ENCODE measurements at regions of chr22 and their contacts with region 1.

Region 1: DNA sequence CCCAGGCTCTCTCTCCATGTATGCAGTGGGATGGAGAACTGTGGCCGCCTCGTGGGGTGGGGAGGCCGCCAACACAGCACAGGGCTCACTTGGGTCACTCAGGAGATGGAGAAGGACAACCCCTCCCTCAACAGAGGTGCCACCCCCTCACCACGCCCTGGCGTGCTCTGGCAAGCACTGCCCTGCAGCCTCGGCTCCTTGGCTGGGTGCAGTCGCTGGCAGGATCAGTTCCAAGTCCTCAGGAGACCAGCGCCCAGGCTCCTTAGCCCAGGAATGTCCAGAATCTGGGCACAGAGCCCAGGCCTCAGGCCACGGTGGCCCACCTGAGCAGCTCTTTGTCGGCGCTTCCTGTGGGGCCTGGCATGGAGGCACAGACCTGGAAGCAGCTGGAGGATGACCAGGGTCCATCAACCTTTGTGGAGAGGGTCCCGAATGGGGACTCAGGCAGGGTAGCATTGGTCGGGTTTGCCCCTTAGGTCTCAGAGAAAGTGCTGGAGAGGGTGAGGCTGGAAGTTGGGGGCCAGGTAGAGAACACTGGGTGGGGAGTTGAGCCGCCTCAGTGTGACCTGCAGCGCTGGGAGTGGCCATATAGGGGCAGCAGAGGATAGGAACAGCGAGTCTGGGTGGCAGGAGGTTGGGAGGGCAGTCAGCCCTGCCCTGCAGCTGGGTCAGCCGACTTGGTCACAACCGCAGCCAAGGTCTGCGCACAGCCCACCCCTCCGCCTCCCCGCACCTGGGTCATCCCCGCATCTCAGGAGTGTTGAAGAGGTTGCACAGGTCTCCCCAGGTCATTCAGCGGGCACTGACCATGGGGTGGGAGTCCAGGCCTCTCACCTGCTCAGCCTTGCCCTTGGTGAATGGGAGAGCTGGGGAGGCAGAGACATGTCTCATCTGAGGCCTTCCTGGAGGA is 8.2 kb downstream of the SUSD2 start:
- DNase-seq: peak; percentile 82 to 88
- H3K4me3 ChIP-seq: no peak overlapping the region; the same call in 1 of the 2 replicates
- H3K27ac ChIP-seq: 0 out of 2 replicates have a peak overlapping the region, but pooled peaks have one; percentile 13
- H3K4me1 ChIP-seq: peaks cover 16% of the 10 kb centered on the region
- H3K27me3 ChIP-seq: no peaks in the 10 kb centered on the region
- CTCF ChIP-seq: peak; percentile 95

Region 2: DNA sequence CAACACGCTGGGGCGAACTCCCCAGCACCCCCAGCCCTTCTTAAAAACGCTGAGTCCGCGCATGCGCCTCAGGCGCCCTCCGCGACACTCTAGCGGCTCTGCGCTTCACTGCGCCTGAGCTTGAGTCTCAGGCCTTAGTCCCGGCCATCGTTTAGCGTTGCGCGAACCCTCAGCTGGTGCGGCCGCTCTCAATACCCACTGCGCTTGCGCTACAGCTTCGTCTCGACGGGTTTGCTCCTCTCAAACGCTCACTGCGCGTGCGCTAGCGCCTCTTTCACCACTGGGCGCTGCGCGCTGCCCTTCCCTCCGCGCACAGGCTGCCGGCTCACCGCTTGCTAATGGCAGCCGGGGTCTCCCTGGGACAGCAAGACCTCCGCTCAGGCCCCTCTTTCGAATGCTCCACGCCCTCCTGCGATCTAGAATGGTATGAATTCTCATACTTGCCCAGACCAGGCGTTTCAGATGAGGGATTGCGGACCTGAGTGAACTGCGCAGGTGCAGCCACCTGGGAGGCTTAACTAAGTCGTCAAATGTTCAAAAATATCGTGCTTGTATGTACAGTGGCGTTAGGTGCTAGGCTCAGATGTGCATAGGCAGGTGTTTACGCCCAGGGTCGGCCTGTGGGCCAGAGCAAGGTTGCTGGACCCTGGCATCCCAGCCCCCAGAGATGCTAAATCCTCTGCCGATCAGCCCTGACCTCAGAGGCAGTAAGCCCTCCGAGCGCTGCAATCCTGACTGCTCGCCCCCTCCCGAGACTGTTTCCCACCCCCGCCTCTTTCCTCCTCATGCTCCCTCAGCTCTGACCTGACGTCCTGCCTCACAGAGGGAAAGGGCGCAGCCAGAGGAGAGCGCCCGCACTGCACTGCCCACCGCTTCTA is 331.7 kb before region 1 on chr22 and contains the start of gene SLC2A11:
- CTCF ChIA-PET with region 1: interaction called, 4 read pairs
- POLR2A ChIA-PET with region 1: no interaction called
- intact Hi-C with region 1: loop called (anchors 10 kb)
- DNase-seq: peak; percentile 88 to 89
- H3K4me3 ChIP-seq: peak within 1 kb of the TSS; percentile 77
- H3K27ac ChIP-seq: peak within 1 kb of the TSS; percentile 86
- H3K4me1 ChIP-seq: peaks cover 10% of the 10 kb centered on the region; the same call in 1 of the 2 replicates
- H3K27me3 ChIP-seq: no peaks in the 10 kb centered on the region
- CTCF ChIP-seq: no peak
- total RNA-seq, gene SLC2A11: 24.0 and 26.9 TPM in 2 replicates

Region 3: DNA sequence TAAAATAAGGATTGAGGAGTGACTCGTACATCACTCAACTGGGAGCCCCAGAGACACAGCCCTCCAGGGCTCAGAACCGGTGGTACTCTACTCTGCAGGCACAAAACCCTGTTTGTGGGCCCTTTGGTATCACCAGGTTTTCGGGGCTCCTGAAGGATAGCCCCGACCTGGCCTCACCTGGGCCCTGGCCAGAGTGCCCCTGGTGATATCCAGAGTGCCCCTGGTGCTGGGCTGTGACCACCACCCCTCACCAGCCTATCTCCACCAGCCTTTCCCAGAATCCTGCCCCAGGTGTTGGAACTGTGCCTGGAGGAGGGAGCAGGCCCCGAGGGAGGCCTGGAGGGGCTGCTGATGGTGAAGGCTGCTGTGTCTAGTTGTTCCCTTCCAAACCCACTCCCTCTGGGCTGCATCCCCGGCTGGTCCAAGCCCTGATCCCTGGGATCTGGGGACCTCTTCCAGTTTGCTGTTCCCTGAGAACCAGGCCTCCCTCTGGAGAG is 57.6 kb after region 1 on chr22:
- CTCF ChIA-PET with region 1: interaction called, 11 read pairs
- POLR2A ChIA-PET with region 1: no interaction called
- intact Hi-C with region 1: loop called (anchors 2 kb)
- DNase-seq: no peak
- H3K4me3 ChIP-seq: no peak overlapping the region
- H3K27ac ChIP-seq: peak overlapping the region; percentile 68
- H3K4me1 ChIP-seq: peaks cover 18% of the 10 kb centered on the region
- H3K27me3 ChIP-seq: no peaks in the 10 kb centered on the region
- CTCF ChIP-seq: no peak

Region 4: DNA sequence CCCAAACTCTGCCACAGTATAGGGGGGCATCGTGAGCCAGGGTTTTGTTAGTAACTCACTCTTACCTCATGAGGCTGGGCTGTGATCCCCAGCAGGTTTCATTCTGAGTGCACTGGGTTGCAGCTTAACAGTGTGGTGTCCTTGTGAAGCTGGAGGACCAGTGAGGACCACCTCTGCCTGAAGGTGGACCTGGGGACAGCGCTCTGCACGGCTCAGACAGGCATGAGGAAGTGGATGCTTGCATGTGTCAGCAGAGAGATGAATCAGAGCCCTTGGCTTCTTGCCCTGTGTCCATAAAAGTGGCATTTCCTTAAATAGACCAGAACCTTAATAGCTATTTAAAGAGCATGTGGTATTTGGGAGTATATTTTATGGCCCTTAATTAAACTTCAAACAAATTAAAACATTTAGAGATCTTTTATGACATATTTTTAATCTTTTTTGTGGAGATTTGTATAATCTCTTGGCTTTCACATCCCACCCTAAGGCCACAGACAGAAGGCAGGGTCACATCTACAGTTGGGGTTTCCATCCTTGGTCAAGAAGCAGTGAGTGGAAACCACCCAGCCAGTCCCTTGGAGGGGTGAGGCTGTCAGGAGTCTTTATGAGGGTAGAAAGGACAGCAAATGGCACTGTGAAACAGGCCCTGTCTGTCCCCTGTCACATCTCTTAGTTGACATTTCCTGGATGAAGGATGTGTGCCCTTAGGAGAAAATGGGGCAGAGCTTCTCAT is 213.1 kb after region 1 on chr22:
- CTCF ChIA-PET with region 1: interaction called, 16 read pairs
- POLR2A ChIA-PET with region 1: no interaction called
- intact Hi-C with region 1: no loop called
- DNase-seq: peak; percentile 69 to 97
- H3K4me3 ChIP-seq: peak overlapping the region; percentile 25; the same call in 1 of the 2 replicates
- H3K27ac ChIP-seq: peak overlapping the region; percentile 77
- H3K4me1 ChIP-seq: peaks cover 33% of the 10 kb centered on the region
- H3K27me3 ChIP-seq: no peaks in the 10 kb centered on the region
- CTCF ChIP-seq: no peak

Measured in PC-9 (cell line).